ENCODE measurements at regions of chr10 and their contacts with region 1.

Region 1: DNA sequence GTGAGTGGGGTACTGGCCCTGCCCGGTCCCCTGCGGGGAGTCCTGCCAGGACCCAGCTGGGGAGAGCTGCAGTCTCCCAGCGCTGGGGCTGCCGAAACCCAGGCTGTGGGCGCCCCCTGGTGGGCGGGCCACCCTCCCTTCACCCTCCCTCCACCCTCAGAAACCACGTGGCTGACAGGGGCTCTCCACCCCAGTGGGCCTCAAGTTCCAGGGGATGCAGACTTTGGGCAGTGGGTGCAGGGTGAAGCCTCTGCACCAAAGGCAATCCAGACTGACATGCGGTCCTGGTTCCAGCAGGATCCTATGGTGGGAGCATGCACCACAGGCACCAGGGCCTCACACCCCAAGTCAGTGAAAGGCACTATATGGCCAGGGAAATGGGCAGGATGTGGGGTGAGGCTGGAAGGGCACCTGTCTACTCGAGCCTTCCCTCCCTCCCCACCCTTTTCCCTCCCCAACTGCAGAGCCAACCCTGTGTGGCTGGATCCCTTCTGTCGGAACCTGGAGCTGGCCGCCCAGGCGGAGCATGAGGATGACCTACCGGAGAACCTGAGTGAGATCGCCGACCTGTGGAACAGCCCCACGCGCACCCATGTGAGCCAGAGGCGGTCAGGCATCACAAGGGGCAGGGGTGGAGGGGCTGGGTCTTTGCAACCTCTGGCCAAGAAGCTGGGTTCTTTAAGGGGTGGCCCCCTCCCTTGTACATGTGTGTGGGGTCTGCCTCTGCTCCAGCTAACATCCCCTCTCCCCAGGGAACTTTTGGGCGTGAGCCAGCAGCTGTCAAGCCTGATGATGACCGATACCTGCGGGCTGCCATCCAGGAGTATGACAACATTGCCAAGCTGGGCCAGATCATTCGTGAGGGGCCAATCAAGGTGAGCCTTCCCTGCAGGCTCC is 38.8 kb downstream of the PSAP start:
- DNase-seq: peak; percentile 83 to 92 (median 90)
- ATAC-seq: peak; percentile 94
- H3K4me3 ChIP-seq: no peak overlapping the region
- H3K27ac ChIP-seq: no peak overlapping the region
- H3K4me1 ChIP-seq: peaks cover 0 to 43% of the 10 kb centered on the region in 2 experiments; a peak in 3 of 5 replicates
- H3K27me3 ChIP-seq: no peaks in the 10 kb centered on the region
- CTCF ChIP-seq: peak; percentile 91 to 95 (median 94)
- EP300 ChIP-seq: no peak
- POLR2A ChIP-seq: no peak
- RAD21 ChIP-seq: peak; percentile 96 to 97

Region 2: GRCh38 chr10:71383972-71384687 is 428.1 kb before region 1 on chr10:
- CTCF ChIA-PET with region 1: interaction called, 9 read pairs
- POLR2A ChIA-PET with region 1: no interaction called
- in situ Hi-C with region 1: loop called (anchors 10 kb)
- intact Hi-C with region 1: loop called (anchors 2 kb)
- DNase-seq: peak; percentile 86 to 92 (median 90)
- ATAC-seq: peak; percentile 98
- H3K4me3 ChIP-seq: no peak overlapping the region
- H3K27ac ChIP-seq: no peak overlapping the region
- H3K4me1 ChIP-seq: peaks cover 3 to 9% of the 10 kb centered on the region in 2 experiments; a peak in 3 of 5 replicates
- H3K27me3 ChIP-seq: peaks cover 5 to 10% of the 10 kb centered on the region in 2 experiments
- CTCF ChIP-seq: peak; percentile 95 to 98 (median 95)
- EP300 ChIP-seq: no peak
- POLR2A ChIP-seq: no peak
- RAD21 ChIP-seq: peak; percentile 82 to 92

Region 3: DNA sequence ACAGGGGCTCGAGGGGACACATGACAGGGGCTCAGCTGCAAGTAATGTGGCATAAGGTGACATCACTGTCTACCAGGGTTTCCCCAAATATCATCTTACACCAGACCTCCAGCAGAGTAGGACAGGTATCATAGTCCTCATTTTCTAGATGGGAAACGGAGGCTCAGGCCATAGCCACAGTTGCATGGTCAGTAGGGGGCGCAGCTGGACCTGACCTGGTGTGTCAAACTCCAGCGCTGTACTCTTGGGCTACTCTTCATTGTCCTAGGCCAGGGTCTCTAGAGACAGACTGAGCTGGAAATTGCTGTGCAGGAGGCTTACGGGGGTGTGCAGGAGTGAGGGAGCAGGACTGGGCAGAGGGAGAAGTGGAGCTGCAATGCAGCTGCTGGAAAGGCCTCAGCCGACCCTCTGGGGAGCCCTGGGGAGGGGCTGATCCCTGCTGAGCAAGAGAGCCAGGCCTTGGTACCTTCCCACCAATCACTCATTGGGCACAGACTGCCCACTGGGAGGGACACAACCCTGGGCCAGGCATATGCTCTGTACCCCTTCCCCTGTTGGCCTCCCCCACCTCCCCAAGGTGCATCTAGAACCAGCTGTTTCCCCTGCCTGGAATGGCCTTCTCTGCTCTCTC is 325.7 kb before region 1 on chr10:
- CTCF ChIA-PET with region 1: interaction called, 4 read pairs
- POLR2A ChIA-PET with region 1: no interaction called
- in situ Hi-C with region 1: no loop called
- intact Hi-C with region 1: loop called (anchors 5 kb)
- DNase-seq: peak; percentile 66 to 82 (median 73)
- ATAC-seq: peak; percentile 98
- H3K4me3 ChIP-seq: no peak overlapping the region
- H3K27ac ChIP-seq: no peak overlapping the region
- H3K4me1 ChIP-seq: no peaks in the 10 kb centered on the region
- H3K27me3 ChIP-seq: peaks cover 24 to 39% of the 10 kb centered on the region in 2 experiments; a peak in 4 of 5 replicates
- CTCF ChIP-seq: peak; percentile 85 to 93 (median 91)
- EP300 ChIP-seq: no peak
- POLR2A ChIP-seq: no peak
- RAD21 ChIP-seq: peak; percentile 51 to 87

Region 4: GRCh38 chr10:71713135-71714030 is 98.9 kb before region 1 on chr10:
- CTCF ChIA-PET with region 1: no interaction called
- POLR2A ChIA-PET with region 1: interaction called, 3 read pairs
- in situ Hi-C with region 1: loop called (anchors 5 kb)
- intact Hi-C with region 1: no loop called
- DNase-seq: peak in 3 of 4 experiments; percentile 44 to 64 (median 63)
- ATAC-seq: peak; percentile 58
- H3K4me3 ChIP-seq: no peak overlapping the region
- H3K27ac ChIP-seq: peak overlapping the region; percentile 73
- H3K4me1 ChIP-seq: peaks cover 24 to 53% of the 10 kb centered on the region in 2 experiments
- H3K27me3 ChIP-seq: no peaks in the 10 kb centered on the region
- CTCF ChIP-seq: peak in 1 of 3 experiments; percentile 11; a peak in 1 of 6 replicates
- EP300 ChIP-seq: no peak
- POLR2A ChIP-seq: no peak
- RAD21 ChIP-seq: peak in 1 of 2 experiments; percentile 19; a peak in 1 of 4 replicates

Region 5: DNA sequence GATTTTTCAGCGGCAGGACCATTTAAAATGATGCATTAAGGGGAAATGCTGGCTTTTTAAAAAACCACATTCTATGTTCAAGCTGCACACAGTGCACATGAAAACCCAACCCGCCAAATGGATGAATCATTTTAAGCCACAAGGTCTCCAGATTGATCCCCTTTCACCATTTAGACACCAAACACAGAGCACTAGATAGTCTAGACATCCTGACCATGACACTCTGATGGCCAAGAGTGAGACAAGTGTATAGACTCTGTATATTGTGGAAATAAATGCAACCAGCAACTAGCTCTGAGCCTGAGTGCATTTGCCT is 10.1 kb after region 1 on chr10:
- CTCF ChIA-PET with region 1: no interaction called
- POLR2A ChIA-PET with region 1: interaction called, 31 read pairs
- in situ Hi-C with region 1: no loop called
- intact Hi-C with region 1: no loop called
- DNase-seq: no peak
- ATAC-seq: no peak
- H3K4me3 ChIP-seq: no peak overlapping the region
- H3K27ac ChIP-seq: no peak overlapping the region
- H3K4me1 ChIP-seq: peaks cover 0 to 5% of the 10 kb centered on the region in 2 experiments; a peak in 1 of 5 replicates
- H3K27me3 ChIP-seq: no peaks in the 10 kb centered on the region
- CTCF ChIP-seq: no peak
- EP300 ChIP-seq: no peak
- POLR2A ChIP-seq: no peak
- RAD21 ChIP-seq: no peak

Region 6: DNA sequence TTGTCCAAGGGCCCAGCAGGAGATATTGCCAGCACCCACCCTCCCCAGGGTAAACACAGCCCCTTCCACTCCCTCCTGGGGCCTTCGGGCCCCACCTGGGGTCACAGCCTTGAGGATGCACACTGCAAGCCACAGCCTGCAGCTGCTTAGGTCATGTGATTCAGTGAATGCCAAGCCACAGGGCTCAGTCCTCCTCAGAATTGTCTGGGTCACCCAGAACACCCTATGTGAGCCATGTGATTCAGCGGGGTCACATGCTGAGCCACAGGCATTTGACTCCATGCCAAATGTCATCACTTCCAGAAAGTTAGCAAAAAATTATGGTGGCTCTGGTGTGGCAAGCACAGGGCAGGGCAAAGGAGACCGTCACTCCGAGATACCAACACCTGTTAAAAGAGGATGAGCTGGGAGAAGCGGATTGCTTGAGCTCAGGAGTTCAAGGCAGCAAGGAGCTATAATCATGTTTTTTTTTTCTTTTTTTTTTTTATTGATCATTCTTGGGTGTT is 56.0 kb after region 1 on chr10:
- CTCF ChIA-PET with region 1: no interaction called
- POLR2A ChIA-PET with region 1: no interaction called
- in situ Hi-C with region 1: no loop called
- intact Hi-C with region 1: no loop called
- DNase-seq: peak; percentile 37 to 82 (median 52)
- ATAC-seq: peak; percentile 82
- H3K4me3 ChIP-seq: no peak overlapping the region
- H3K27ac ChIP-seq: peak overlapping the region; percentile 55; the same call in 2 of the 3 replicates
- H3K4me1 ChIP-seq: peaks cover 13 to 27% of the 10 kb centered on the region in 2 experiments
- H3K27me3 ChIP-seq: no peaks in the 10 kb centered on the region
- CTCF ChIP-seq: no peak
- EP300 ChIP-seq: 0 out of 2 replicates have a peak, but pooled peaks have one; percentile 27
- POLR2A ChIP-seq: no peak
- RAD21 ChIP-seq: no peak